Sigmoid colon (tissue), 7 donors: ENCODE measurements at regions of chr2 and their contacts with region 1.

Region 1: DNA sequence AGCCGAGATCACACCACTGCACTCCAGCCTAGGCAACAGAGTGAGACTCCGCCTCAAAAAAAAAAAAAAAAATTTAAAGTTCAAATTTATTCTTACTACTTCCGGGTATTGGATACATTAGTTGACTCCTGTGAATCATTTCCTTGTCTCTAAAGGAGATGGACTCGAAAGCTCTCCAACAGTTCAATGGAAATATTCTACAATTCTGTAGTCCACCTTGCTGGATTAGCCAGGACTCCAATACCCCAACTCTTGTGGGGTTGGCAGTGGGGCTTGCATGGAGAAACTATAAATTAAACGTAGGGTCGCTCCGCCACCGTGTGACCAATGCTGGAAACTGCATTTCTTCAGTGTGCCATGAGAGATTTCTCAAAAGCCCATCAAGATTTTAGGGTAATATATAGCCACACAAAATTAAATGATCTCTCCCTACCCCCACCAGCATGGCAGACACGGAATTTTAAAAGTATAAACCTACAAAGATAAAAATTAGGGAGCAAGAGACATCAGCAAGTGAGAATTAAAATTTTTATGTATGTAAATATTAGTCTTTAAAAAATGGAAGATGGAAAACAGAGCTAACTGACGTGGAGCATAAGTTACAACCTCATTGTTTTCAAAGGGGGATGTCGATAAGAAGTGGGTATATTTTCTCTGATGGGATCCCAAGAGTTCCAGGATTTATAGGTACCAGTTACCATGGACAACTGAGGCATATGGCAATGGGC is 27.8 kb upstream of the GAREM2 start:
- DNase-seq: no peak
- H3K4me3 ChIP-seq: no peak overlapping the region
- H3K27ac ChIP-seq: no peak overlapping the region
- H3K4me1 ChIP-seq: no peaks in the 10 kb centered on the region
- H3K27me3 ChIP-seq: peaks cover 0 to 22% (median 0%) of the 10 kb centered on the region in 3 donors
- CTCF ChIP-seq: peak; percentile 46 to 86 (median 74)
- EP300 ChIP-seq: no peak
- POLR2A ChIP-seq: no peak

Region 2: DNA sequence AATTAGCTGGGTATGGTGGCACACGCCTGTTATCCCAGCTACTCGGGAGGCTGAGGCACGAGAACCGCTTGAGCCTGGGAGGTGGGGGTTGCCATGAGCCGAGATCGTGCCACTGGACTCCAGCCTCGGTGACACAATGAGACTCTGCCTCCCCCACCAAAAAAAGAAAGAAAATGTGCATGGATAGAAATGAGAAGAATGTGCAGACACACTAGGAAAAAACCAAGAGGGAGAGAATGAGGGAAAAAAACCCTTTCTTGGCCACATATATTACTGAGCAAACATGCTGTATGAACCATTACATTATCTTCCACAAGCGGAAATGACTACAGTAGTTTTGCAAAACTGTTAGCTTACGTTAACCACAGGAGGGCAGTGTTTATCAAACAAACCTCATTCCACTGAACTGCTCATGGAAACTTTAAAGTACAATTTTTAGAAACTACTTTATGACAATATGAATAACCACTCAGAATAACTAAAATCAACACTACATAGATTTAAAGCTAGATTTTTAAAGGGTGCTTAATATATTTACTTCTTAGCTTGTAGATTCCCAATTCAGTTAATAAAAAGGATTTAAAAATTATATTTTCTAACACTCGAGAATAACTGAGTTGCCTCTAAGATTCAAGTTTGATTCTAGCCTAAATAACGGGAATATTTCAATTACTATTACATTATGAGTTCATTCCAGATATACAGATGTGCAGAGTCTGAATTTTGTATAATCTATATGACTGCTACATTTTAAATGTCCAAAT is 293.2 kb before region 1 on chr2:
- intact Hi-C with region 1: loop called (anchors 10 kb)
- DNase-seq: no peak
- H3K4me3 ChIP-seq: no peak overlapping the region
- H3K27ac ChIP-seq: no peak overlapping the region
- H3K4me1 ChIP-seq: peaks cover 0 to 17% (median 8%) of the 10 kb centered on the region in 4 donors
- H3K27me3 ChIP-seq: no peaks in the 10 kb centered on the region
- CTCF ChIP-seq: peak; percentile 20 to 60 (median 57)
- EP300 ChIP-seq: no peak
- POLR2A ChIP-seq: no peak

Region 3: DNA sequence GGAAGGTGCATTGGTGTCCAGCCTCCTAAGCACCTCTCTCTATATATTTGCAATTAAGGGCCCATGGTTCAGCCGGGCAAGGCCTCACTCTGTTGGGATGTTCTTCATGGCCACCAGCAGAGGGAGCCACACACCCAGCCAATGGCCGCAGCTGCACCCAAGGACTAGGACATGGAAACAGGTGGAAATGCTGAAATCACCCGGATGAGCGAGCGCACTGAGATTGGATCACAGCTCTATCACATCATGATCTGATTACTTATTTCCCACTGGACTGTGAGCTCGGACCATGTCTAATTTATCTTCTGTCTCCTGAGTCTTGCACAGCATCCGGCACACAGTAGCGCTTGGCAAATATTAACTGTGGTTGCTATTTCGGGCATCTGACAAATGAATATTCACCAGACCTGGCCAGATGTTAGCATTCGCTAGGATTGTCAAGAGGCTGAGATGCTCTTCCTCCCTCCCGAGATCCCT is 194.0 kb before region 1 on chr2:
- intact Hi-C with region 1: loop called (anchors 1 kb)
- DNase-seq: peak; percentile 90
- H3K4me3 ChIP-seq: no peak overlapping the region
- H3K27ac ChIP-seq: peak overlapping the region in 3 of 4 donors; percentile 10 to 46 (median 39)
- H3K4me1 ChIP-seq: peaks cover 0 to 4% (median 0%) of the 10 kb centered on the region in 4 donors
- H3K27me3 ChIP-seq: no peaks in the 10 kb centered on the region
- CTCF ChIP-seq: peak; percentile 79 to 89 (median 88)
- EP300 ChIP-seq: no peak
- POLR2A ChIP-seq: no peak

Region 4: DNA sequence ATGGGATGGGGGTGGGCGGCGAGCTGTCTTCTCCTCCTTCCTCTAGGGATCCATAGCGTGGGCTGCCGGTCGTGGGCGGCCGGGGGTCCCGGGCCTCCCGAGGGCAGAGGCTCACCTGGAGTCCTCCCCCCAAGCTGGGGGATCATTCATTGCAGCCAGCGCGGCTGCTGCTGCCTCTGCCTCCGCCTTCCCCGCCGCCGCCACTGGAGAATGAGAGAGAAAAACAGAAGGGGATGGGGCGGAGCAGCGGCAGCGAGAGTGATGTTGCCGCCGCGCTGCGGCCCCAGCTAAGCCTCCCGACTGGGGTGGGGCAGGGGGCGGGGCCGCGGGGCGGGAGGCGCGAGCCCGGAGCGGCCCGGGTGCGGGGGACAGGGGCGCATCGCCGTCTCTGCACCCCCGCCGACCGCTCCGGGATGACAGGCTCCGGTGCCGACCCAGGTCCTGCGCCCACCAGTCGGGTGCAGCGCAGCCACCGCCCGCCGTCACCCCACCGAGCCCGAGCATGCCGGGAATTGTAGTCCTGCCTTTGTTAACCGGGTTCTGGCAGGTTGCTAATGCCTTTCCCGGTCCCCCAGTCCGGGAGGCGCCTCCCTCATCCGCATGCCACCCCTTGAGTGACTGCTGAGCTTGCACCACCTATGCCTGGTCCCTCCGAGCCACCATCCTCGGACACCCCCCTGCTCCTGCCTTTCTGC is 162.7 kb before region 1 on chr2 and contains the start of gene KIF3C:
- intact Hi-C with region 1: loop called (anchors 2 kb)
- DNase-seq: peak; percentile 86
- H3K4me3 ChIP-seq: peak within 1 kb of the TSS; percentile 68 to 95 (median 78)
- H3K27ac ChIP-seq: peak within 1 kb of the TSS; percentile 68 to 82 (median 74)
- H3K4me1 ChIP-seq: peaks cover 0 to 54% (median 41%) of the 10 kb centered on the region in 4 donors
- H3K27me3 ChIP-seq: no peaks in the 10 kb centered on the region
- CTCF ChIP-seq: no peak
- EP300 ChIP-seq: no peak
- POLR2A ChIP-seq: no peak
- total RNA-seq, gene KIF3C: 5.7 to 12.5 (median 8.1) TPM

Region 5: DNA sequence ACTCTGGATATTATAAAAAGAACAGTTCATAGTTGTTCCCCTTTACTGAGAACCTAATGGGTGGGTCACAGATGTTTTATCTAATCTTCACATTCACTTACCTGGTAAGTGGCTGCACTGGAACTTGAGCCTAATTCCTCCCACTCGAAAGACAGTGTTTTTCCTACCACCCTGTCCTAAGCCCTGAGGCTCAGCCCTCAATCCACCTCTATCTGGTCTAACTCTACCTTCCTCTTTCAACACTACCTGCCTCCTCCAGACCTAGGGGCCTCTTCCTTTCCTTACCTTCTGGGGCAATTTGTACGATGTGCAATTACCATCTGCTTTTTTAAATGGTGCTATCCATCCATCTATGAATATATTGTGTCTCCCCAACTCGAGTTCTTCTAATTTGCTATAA is 153.2 kb before region 1 on chr2:
- intact Hi-C with region 1: loop called (anchors 2 kb)
- DNase-seq: no peak
- H3K4me3 ChIP-seq: no peak overlapping the region
- H3K27ac ChIP-seq: no peak overlapping the region
- H3K4me1 ChIP-seq: peaks cover 0 to 7% (median 0%) of the 10 kb centered on the region in 4 donors
- H3K27me3 ChIP-seq: no peaks in the 10 kb centered on the region
- CTCF ChIP-seq: no peak
- EP300 ChIP-seq: no peak
- POLR2A ChIP-seq: no peak

Region 6: DNA sequence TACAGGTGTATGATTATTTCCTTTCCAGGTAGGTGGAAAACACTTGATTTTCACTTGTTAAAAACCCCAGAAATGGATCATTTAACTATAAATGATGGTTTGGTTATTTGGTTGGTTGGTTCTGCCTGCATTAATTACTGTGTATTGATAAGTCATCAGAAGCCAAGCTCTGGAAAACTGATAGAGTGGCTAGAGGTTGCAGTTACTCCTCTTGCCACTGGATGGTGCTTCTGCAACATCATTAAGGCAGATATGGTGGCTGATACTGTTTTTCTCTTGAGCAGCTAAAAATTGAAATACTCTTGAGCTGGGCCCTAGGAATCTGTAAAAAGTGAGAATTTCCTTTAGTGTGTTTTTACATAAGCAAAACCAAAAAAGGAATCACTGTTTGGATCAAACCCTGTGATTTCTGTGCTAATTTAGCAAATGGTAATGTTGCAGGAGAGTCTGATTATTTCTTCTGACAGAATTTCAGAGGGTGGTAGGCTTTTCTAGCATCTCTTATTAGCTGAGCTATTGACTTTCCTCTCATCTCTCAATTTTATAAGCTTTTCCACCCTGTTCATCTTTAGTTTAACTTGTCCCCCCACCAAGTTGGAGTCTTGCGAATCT is 57.0 kb before region 1 on chr2:
- intact Hi-C with region 1: loop called (anchors 5 kb)
- DNase-seq: no peak
- H3K4me3 ChIP-seq: no peak overlapping the region
- H3K27ac ChIP-seq: no peak overlapping the region
- H3K4me1 ChIP-seq: peaks cover 0 to 19% (median 15%) of the 10 kb centered on the region in 4 donors
- H3K27me3 ChIP-seq: no peaks in the 10 kb centered on the region
- CTCF ChIP-seq: peak in 3 of 4 experiments; percentile 58 to 68 (median 62)
- EP300 ChIP-seq: no peak
- POLR2A ChIP-seq: no peak

Region 7: GRCh38 chr2:26196683-26197418 is 51.7 kb after region 1 on chr2:
- intact Hi-C with region 1: no loop called
- DNase-seq: no peak
- H3K4me3 ChIP-seq: no peak overlapping the region
- H3K27ac ChIP-seq: no peak overlapping the region
- H3K4me1 ChIP-seq: peaks cover 0 to 8% (median 0%) of the 10 kb centered on the region in 4 donors
- H3K27me3 ChIP-seq: no peaks in the 10 kb centered on the region
- CTCF ChIP-seq: no peak
- EP300 ChIP-seq: no peak
- POLR2A ChIP-seq: no peak

Region 8: GRCh38 chr2:26284136-26284535 is 139.0 kb after region 1 on chr2:
- intact Hi-C with region 1: no loop called
- DNase-seq: no peak
- H3K4me3 ChIP-seq: no peak overlapping the region
- H3K27ac ChIP-seq: no peak overlapping the region
- H3K4me1 ChIP-seq: no peaks in the 10 kb centered on the region
- H3K27me3 ChIP-seq: no peaks in the 10 kb centered on the region
- CTCF ChIP-seq: no peak
- EP300 ChIP-seq: no peak
- POLR2A ChIP-seq: no peak

Region 9: DNA sequence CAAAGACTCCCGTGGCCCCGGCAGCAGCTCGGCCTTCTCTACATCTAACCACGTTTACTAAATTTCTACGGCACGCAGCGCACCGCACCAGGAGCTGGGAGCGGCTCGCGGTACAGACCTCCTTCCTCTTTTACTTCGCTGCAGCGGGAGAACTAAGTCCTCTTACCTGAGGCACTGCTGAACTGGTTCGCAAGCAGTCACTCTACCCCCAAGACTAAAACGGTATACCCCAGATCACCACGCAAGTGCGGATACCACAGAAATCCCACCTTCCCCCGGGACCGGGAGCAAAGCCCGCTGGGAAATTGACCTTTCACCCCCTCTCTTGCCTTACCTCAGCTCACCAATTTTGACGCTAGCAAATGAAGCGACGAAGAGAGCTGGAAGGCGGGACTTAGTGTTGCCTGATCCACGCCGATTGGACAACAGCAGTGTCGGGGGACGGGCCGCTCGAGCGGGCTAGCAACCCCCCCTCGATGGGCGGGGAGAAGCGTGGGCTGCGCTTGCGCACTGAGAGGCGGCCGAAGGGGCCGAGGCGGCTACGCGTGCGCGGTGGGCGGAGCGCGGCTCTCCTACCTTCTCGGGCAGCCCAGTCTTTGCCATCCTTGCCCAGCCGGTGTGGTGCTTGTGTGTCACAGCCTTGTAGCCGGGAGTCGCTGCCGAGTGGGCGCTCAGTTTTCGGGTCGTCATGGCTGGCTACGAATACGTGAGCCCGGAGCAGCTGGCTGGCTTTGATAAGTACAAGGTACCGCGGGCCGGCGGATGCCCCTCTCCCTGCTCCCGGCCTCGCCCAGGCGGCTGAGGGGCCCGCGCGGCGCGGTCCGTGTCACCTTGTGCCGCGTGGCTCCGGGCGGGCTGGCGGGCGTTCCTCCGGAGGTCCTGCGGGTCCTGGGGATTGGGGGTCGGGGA is 200.7 kb after region 1 on chr2 and contains the start of gene SELENOI:
- intact Hi-C with region 1: no loop called
- DNase-seq: peak; percentile 99
- H3K4me3 ChIP-seq: peak within 1 kb of the TSS; percentile 64 to 90 (median 80)
- H3K27ac ChIP-seq: peak within 1 kb of the TSS; percentile 90 to 97 (median 92)
- H3K4me1 ChIP-seq: peaks cover 0 to 27% (median 26%) of the 10 kb centered on the region in 4 donors
- H3K27me3 ChIP-seq: no peaks in the 10 kb centered on the region
- CTCF ChIP-seq: no peak
- EP300 ChIP-seq: peak in 1 of 4 donors; percentile 24
- POLR2A ChIP-seq: peak; percentile 94 to 97
- total RNA-seq, gene SELENOI: 6.6 to 11.0 (median 8.9) TPM

Region 10: DNA sequence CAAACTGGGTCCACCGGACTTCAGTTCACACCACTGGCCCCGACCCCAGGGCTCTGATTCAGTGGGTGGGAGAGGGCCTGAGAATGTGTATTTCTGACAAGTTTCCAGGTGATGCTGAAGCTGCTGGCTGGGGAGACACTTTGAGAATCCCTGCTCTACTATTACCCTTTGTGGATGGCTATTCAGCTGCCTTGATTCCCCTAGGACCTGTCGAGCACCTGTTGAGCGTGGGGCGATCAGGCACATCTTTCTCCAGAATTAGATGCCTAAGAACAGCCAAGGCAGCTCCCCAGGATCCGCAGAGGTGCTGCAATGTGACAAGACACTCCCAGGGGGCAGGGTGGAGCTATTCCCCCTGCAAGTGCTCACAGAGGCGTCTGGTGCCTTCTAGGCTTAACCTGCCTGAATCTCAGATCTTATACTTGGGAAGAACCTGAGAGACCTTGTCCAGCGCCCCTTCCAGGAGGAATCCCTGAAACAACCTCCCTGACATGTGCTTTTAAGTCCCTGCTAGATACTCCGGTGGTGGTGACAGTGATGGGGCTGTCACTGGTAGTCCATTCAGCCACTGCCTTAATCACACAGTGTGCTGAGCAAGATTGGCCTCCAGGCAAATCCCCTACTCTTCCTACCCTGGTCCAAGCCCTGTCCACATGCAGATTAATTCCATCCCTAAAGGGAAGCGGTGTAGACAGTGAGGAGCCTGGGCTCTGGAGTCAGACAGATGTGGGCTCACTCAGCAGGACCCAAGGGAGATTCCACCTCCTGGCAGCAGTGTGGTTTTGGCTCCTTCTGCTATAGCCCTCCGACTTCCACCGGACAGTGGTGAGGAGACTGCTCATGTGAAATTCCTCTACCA is 376.2 kb after region 1 on chr2:
- intact Hi-C with region 1: no loop called
- DNase-seq: peak; percentile 39
- H3K4me3 ChIP-seq: no peak overlapping the region
- H3K27ac ChIP-seq: no peak overlapping the region
- H3K4me1 ChIP-seq: no peaks in the 10 kb centered on the region
- H3K27me3 ChIP-seq: peaks cover 0 to 3% (median 0%) of the 10 kb centered on the region in 3 donors
- CTCF ChIP-seq: no peak
- EP300 ChIP-seq: no peak
- POLR2A ChIP-seq: no peak